HEK293T (cell line): ENCODE measurements at regions of chr6 and their contacts with region 1.

Region 1: GRCh38 chr6:31660381-31661261 is at the start of gene C6orf47:
- DNase-seq: peak; percentile 79

Region 2: DNA sequence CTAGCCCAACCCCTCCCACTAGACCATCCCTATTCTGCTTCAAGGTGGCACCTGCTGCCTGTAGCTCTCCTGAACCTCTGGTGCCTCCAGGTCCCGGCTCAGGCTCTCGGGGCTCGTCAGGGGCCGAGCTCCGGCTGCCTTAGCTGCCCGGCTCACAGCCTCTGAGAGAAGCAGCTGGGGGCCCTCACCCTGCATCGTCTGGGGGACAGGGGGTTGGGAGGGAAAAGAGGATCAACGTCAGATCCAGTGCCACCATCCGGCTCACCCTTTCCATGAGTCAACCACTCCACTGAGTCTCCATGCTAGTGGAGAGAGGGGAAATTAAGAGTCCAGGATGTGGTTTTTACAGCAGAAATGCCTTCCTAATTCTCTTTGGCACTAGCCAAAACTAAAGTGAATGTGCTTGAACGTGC is 21.2 kb before region 1 on chr6:
- CTCF ChIA-PET with region 1: no interaction called
- POLR2A ChIA-PET with region 1: interaction called, 20 read pairs
- DNase-seq: no peak